ENCODE measurements at regions of chr6 and their contacts with region 1.

Region 1: GRCh38 chr6:134822920-134823709 is 126.8 kb downstream of the ALDH8A1 start:
- DNase-seq: peak; percentile 88
- H3K4me3 ChIP-seq: no peak overlapping the region
- CTCF ChIP-seq: peak; percentile 88

Region 2: GRCh38 chr6:134182528-134182927 is 640.6 kb before region 1 on chr6:
- in situ Hi-C with region 1: loop called (anchors 5 kb)
- DNase-seq: no peak
- H3K4me3 ChIP-seq: no peak overlapping the region
- CTCF ChIP-seq: no peak

Region 3: GRCh38 chr6:134529921-134530320 is 293.2 kb before region 1 on chr6:
- in situ Hi-C with region 1: loop called (anchors 10 kb)
- DNase-seq: no peak
- H3K4me3 ChIP-seq: no peak overlapping the region
- CTCF ChIP-seq: no peak

Region 4: GRCh38 chr6:134669485-134669884 is 153.6 kb before region 1 on chr6:
- in situ Hi-C with region 1: loop called (anchors 5 kb)
- DNase-seq: no peak
- H3K4me3 ChIP-seq: no peak overlapping the region
- CTCF ChIP-seq: no peak

Region 5: GRCh38 chr6:134707342-134708031 is 115.6 kb before region 1 on chr6:
- in situ Hi-C with region 1: no loop called
- DNase-seq: no peak
- H3K4me3 ChIP-seq: no peak overlapping the region
- CTCF ChIP-seq: no peak

Region 6: DNA sequence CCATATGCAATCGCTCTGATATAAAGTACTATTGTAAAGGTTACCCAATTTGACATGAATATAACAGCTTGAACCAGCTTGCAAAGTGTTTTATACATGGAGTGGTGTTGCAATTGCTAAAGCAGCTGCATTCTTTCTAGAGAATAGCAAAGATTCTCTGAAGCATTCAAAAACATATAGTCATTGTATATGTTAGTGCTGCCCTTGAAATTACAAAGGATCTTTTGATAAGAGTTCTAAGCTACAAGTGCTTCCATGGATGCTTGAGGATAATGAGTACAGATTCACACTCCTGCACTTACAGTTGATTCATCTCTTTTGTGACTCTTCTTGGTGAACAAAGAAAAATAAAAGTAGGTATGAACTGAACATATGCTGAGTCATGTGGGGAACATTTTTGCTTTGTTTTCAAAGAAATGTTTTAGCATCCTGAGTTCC is 48.9 kb before region 1 on chr6:
- in situ Hi-C with region 1: no loop called
- DNase-seq: peak; percentile 23
- H3K4me3 ChIP-seq: no peak overlapping the region
- CTCF ChIP-seq: no peak

Region 7: GRCh38 chr6:134863771-134864510 is 40.8 kb after region 1 on chr6:
- in situ Hi-C with region 1: no loop called
- DNase-seq: no peak
- H3K4me3 ChIP-seq: no peak overlapping the region
- CTCF ChIP-seq: no peak

Measured in astrocyte of the cerebellum (primary cell).